ENCODE measurements at regions of chr18 and their contacts with region 1.

Region 1: GRCh38 chr18:22933206-22933957 is at the start of gene RBBP8:
- DNase-seq: peak; percentile 94
- ATAC-seq: peak; percentile 82
- H3K4me3 ChIP-seq: peak within 1 kb of the TSS; percentile 81 to 99 (median 90)
- H3K4me3 Mint-ChIP-seq: peak within 1 kb of the TSS; percentile 88
- H3K27ac ChIP-seq: peak within 1 kb of the TSS; percentile 99
- H3K27ac Mint-ChIP-seq: peak within 1 kb of the TSS; percentile 96
- H3K4me1 ChIP-seq: peaks cover 6 to 11% of the 10 kb centered on the region in 2 donors
- H3K4me1 Mint-ChIP-seq: peaks cover 18% of the 10 kb centered on the region
- H3K27me3 ChIP-seq: no peaks in the 10 kb centered on the region
- H3K27me3 Mint-ChIP-seq: no peaks in the 10 kb centered on the region
- CTCF ChIP-seq: no peak
- total RNA-seq, gene RBBP8: 18.0 and 19.3 TPM in 2 replicates

Region 2: GRCh38 chr18:22983175-22983574 is 49.8 kb after region 1 on chr18:
- CTCF ChIA-PET with region 1: interaction called, 61 read pairs
- POLR2A ChIA-PET with region 1: interaction called, 3 read pairs
- intact Hi-C with region 1: loop called (anchors 1 kb)
- DNase-seq: peak; percentile 47
- ATAC-seq: no peak
- H3K4me3 ChIP-seq: no peak overlapping the region
- H3K4me3 Mint-ChIP-seq: no peak overlapping the region
- H3K27ac ChIP-seq: no peak overlapping the region
- H3K27ac Mint-ChIP-seq: no peak overlapping the region
- H3K4me1 ChIP-seq: peaks cover 18 to 22% of the 10 kb centered on the region in 2 donors
- H3K4me1 Mint-ChIP-seq: peaks cover 24% of the 10 kb centered on the region
- H3K27me3 ChIP-seq: no peaks in the 10 kb centered on the region
- H3K27me3 Mint-ChIP-seq: no peaks in the 10 kb centered on the region
- CTCF ChIP-seq: peak; percentile 68

Region 3: GRCh38 chr18:23131693-23132319 is 198.4 kb after region 1 on chr18:
- CTCF ChIA-PET with region 1: interaction called, 4 read pairs
- POLR2A ChIA-PET with region 1: interaction called, 3 read pairs
- intact Hi-C with region 1: loop called (anchors 1 kb)
- DNase-seq: peak; percentile 85
- ATAC-seq: no peak
- H3K4me3 ChIP-seq: no peak overlapping the region
- H3K4me3 Mint-ChIP-seq: no peak overlapping the region
- H3K27ac ChIP-seq: no peak overlapping the region
- H3K27ac Mint-ChIP-seq: no peak overlapping the region
- H3K4me1 ChIP-seq: peaks cover 24 to 28% of the 10 kb centered on the region in 2 donors
- H3K4me1 Mint-ChIP-seq: peaks cover 21% of the 10 kb centered on the region
- H3K27me3 ChIP-seq: peaks cover 0 to 33% (median 16%) of the 10 kb centered on the region in 4 experiments
- H3K27me3 Mint-ChIP-seq: peaks cover 16% of the 10 kb centered on the region
- CTCF ChIP-seq: peak; percentile 95

Region 4: DNA sequence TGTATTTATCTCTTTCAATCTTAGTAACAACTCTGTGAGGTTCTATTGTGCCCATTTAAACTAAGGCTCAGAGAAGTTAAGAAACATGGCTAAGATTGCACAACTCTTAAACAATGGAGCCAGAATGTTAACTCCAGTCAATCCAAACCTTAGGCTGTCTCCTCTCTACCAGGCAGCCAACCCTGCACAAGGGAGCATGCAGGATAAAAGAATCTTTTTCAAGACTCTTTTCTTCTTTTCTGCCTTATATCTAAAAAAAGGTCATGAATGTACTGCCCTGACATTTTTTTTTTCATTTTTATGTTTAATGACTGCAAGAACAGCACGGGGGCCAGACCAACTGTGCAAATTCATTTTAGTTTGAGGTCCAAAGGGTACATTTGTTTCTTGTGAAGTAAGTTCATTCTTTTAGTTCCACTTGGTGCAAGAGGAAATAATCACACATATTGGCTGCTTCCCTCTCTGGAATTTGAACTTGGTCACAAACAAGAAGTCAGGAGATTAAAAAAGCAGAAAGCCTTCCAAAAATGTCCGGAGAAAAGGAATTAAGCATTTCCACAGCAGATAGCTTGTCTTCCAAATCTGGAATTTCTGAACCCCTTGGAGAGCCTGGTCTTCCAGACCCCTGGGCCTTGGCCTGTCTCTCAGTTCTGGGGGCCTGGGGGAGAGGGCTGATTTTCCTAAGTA is 423.7 kb after region 1 on chr18:
- CTCF ChIA-PET with region 1: interaction called, 10 read pairs
- POLR2A ChIA-PET with region 1: no interaction called
- intact Hi-C with region 1: loop called (anchors 1 kb)
- DNase-seq: no peak
- ATAC-seq: no peak
- H3K4me3 ChIP-seq: no peak overlapping the region
- H3K4me3 Mint-ChIP-seq: no peak overlapping the region
- H3K27ac ChIP-seq: no peak overlapping the region
- H3K27ac Mint-ChIP-seq: no peak overlapping the region
- H3K4me1 ChIP-seq: peaks cover 17 to 24% of the 10 kb centered on the region in 2 donors
- H3K4me1 Mint-ChIP-seq: peaks cover 35% of the 10 kb centered on the region
- H3K27me3 ChIP-seq: no peaks in the 10 kb centered on the region
- H3K27me3 Mint-ChIP-seq: no peaks in the 10 kb centered on the region
- CTCF ChIP-seq: no peak

Region 5: GRCh38 chr18:23412351-23412964 is 479.1 kb after region 1 on chr18:
- CTCF ChIA-PET with region 1: interaction called, 57 read pairs
- POLR2A ChIA-PET with region 1: no interaction called
- intact Hi-C with region 1: loop called (anchors 1 kb)
- DNase-seq: no peak
- ATAC-seq: no peak
- H3K4me3 ChIP-seq: no peak overlapping the region
- H3K4me3 Mint-ChIP-seq: no peak overlapping the region
- H3K27ac ChIP-seq: no peak overlapping the region
- H3K27ac Mint-ChIP-seq: no peak overlapping the region
- H3K4me1 ChIP-seq: peaks cover 0 to 3% of the 10 kb centered on the region in 2 donors
- H3K4me1 Mint-ChIP-seq: peaks cover 5% of the 10 kb centered on the region
- H3K27me3 ChIP-seq: no peaks in the 10 kb centered on the region
- H3K27me3 Mint-ChIP-seq: no peaks in the 10 kb centered on the region
- CTCF ChIP-seq: no peak

Region 6: DNA sequence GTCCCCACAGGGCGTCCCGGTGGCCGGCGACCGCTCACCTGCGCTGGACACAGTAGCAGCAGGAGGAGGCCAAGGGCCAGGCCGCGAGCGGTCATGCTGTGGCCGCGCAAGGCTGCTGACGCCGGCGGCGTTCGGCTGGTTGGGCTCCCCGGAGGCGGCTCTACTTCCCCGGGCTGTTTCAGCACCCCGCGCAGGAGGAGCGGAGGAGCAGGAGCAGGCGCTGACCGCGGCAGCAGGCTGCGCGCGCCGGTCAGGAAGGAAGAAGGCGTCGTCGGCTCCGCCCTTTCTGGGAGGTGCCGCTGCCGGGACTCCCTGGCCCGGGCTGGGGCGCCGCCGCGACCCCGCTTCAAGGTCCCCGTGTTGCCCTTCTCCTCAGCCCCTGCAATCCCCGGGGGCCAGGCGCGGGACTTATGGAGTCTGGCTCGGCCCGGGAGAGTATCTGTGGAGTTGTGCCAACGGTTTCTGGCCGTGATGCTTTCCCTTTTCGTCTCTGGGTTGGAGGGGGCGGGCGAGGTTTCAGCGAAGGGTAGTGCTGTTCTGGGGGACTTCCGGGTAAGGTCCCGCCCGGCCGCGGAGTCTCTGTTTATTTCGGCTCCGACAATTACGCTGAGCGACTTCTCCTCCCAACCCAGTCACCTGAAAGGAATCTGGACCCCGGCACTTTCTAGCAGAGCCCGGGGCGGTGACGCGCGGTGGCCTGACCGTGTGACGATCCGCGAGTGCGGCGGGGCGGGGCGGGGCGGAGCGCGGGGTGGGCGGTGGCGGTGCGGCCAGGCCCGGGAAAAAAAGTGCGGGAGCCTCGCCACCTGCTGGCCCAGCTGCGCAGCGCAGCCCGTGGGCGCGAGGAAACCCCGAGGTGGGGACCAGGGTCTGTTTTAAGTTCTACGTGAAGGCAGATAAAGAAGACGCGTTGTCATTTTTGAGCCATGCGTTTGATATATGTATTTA is 653.1 kb after region 1 on chr18 and contains the start of gene NPC1:
- CTCF ChIA-PET with region 1: no interaction called
- POLR2A ChIA-PET with region 1: no interaction called
- intact Hi-C with region 1: loop called (anchors 2 kb)
- DNase-seq: peak; percentile 93
- ATAC-seq: peak; percentile 87
- H3K4me3 ChIP-seq: peak within 1 kb of the TSS; percentile 79 to 99 (median 97)
- H3K4me3 Mint-ChIP-seq: peak within 1 kb of the TSS; percentile 93
- H3K27ac ChIP-seq: peak within 1 kb of the TSS; percentile 99
- H3K27ac Mint-ChIP-seq: peak within 1 kb of the TSS; percentile 97
- H3K4me1 ChIP-seq: peaks cover 13 to 21% of the 10 kb centered on the region in 2 donors
- H3K4me1 Mint-ChIP-seq: peaks cover 23% of the 10 kb centered on the region
- H3K27me3 ChIP-seq: no peaks in the 10 kb centered on the region
- H3K27me3 Mint-ChIP-seq: no peaks in the 10 kb centered on the region
- CTCF ChIP-seq: peak; percentile 95
- total RNA-seq, gene NPC1: 44.4 and 48.5 TPM in 2 replicates

Region 7: DNA sequence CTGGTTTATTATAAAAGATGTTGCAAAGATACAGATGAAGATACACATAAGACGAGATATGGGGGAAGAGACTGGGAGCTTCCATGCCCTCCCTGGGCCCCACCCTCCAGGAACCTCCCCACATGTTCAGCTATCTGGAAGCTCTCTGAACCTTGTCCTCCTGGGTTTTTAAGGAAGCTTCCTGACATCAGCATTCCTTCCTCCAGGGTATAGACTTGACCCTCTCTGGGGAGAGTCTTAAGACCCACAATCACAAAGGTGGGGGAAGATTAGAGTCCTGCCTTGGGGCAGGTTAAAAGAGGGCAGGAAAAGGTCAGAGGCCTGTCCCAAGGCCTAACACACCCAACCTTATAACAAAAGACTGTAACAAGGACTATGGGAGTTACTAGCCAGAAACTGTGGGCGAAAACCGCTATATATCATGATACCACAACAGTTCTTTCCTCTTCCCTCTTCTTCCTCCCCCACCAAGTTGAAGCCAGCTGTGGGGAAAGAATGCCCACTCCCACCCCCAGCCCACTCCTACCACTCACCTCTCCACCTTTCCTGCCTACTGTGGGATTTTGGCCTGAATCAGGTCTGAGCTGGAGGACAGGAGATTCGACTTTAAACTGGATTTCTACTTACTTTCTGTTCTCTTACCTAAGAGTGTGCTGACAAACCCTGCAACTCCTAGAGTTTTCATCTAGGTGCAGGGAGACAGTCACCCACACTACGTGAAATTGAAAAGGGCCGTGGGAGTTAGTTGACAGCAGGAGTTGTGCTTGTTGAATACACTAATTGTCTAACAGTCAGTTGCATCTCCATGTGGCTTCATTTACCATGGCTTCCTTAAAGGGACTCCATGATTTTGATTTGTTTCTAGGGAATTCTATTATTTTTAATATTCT is 860.8 kb after region 1 on chr18:
- CTCF ChIA-PET with region 1: no interaction called
- POLR2A ChIA-PET with region 1: no interaction called
- intact Hi-C with region 1: no loop called
- DNase-seq: no peak
- ATAC-seq: no peak
- H3K4me3 ChIP-seq: no peak overlapping the region
- H3K4me3 Mint-ChIP-seq: no peak overlapping the region
- H3K27ac ChIP-seq: no peak overlapping the region
- H3K27ac Mint-ChIP-seq: no peak overlapping the region
- H3K4me1 ChIP-seq: no peaks in the 10 kb centered on the region
- H3K4me1 Mint-ChIP-seq: no peaks in the 10 kb centered on the region
- H3K27me3 ChIP-seq: no peaks in the 10 kb centered on the region
- H3K27me3 Mint-ChIP-seq: no peaks in the 10 kb centered on the region
- CTCF ChIP-seq: no peak